ENCODE measurements at regions of chr1 and their contacts with region 1.

Region 1: DNA sequence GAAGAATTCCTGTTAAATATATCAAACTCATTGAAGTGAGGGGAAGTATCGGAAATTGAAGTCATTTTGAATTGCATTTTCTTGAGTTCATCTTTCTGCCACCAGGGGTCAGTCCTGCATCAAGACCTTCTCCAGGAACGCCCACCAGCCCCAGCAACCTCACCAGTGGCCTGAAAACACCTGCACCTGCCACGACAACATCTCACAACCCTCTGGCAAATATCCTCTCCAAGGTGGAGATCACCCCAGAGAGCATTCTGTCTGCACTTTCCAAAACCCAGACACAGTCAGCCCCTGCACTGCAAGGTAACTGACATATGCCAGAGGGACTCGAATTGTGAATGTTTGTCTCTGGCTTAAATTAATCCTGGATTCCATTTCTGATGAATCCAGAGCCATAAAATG is 22.8 kb upstream of the TARS2 start:
- DNase-seq: peak; percentile 44 to 62 (median 54)
- ATAC-seq: peak; percentile 73 to 79 (median 74)
- H3K4me3 ChIP-seq: no peak overlapping the region
- H3K27ac ChIP-seq: no peak overlapping the region
- H3K4me1 ChIP-seq: peaks cover 0 to 35% (median 11%) of the 10 kb centered on the region in 4 donors
- H3K27me3 ChIP-seq: no peaks in the 10 kb centered on the region
- CTCF ChIP-seq: peak; percentile 71 to 81 (median 73)
- POLR2A ChIP-seq: no peak

Region 2: DNA sequence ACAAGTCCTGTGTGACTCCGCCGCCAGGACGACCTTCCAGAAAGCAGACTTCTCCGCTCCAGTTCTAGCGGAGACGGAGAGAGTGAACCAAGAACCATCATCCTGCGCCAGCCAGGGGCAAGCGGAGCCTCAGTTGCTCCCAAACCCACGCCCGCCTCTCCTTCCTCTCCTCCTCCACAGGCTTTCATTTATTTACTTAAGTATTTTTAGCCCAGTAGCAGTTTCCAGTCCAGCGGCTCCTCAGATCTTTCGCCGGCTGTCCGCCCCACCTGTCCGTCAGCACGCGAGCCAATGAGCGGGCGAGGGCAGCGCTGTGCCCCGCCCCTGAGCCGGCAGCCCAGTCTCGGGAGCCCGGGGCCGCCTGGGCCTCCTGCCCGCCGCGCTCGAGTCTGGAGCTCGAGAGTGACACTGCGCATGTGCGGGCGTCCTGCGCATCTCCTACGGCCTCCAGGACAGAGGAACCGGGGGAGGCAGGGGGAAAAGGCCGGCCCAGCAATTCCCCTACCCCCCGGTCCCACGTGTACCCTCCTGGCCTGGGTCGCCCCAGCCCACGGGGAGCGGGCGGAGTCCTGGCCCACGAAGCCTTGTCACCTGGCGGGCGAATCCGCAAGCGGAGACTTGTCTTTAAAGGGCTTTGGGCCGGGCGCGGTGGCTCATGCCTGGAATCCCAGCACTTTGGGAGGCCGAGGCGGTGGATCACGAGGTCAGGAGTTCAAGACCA is 51.1 kb after region 1 on chr1 and contains the start of gene FALEC:
- intact Hi-C with region 1: loop called in 1 of 2 experiments (anchors 10 kb)
- DNase-seq: peak; percentile 98 to 99 (median 99)
- ATAC-seq: peak; percentile 97 to 99 (median 98)
- H3K4me3 ChIP-seq: peak within 1 kb of the TSS; percentile 31 to 58 (median 56)
- H3K27ac ChIP-seq: peak within 1 kb of the TSS; percentile 35 to 73 (median 67)
- H3K4me1 ChIP-seq: peaks cover 0 to 13% (median 5%) of the 10 kb centered on the region in 4 donors
- H3K27me3 ChIP-seq: no peaks in the 10 kb centered on the region
- CTCF ChIP-seq: peak in 1 of 4 donors; percentile 16
- POLR2A ChIP-seq: peak; percentile 28
- total RNA-seq, gene FALEC: not detected

Region 3: GRCh38 chr1:150537732-150538684 is 73.6 kb after region 1 on chr1:
- intact Hi-C with region 1: loop called in 1 of 2 experiments (anchors 10 kb)
- DNase-seq: peak in 1 of 3 donors; percentile 40
- ATAC-seq: peak in 1 of 4 donors; percentile 35
- H3K4me3 ChIP-seq: no peak overlapping the region
- H3K27ac ChIP-seq: no peak overlapping the region
- H3K4me1 ChIP-seq: peaks cover 0 to 2% (median under 1%) of the 10 kb centered on the region in 4 donors
- H3K27me3 ChIP-seq: no peaks in the 10 kb centered on the region
- CTCF ChIP-seq: no peak
- POLR2A ChIP-seq: no peak

Measured in right lobe of liver (tissue), 6 donors.